ENCODE measurements at regions of chr1 and their contacts with region 1.

Region 1: GRCh38 chr1:203789956-203790355 is 5.5 kb upstream of the ZBED6 start:
- DNase-seq: no peak
- H3K4me3 ChIP-seq: no peak overlapping the region
- H3K27ac ChIP-seq: no peak overlapping the region
- H3K4me1 ChIP-seq: peaks cover 1 to 3% (median 2%) of the 10 kb centered on the region in 4 donors
- H3K27me3 ChIP-seq: no peaks in the 10 kb centered on the region
- CTCF ChIP-seq: no peak
- EP300 ChIP-seq: no peak
- POLR2A ChIP-seq: no peak

Region 2: GRCh38 chr1:203774075-203774474 is 15.9 kb before region 1 on chr1:
- in situ Hi-C with region 1: no loop called
- intact Hi-C with region 1: loop called (anchors 1 kb)
- DNase-seq: no peak
- H3K4me3 ChIP-seq: no peak overlapping the region
- H3K27ac ChIP-seq: no peak overlapping the region
- H3K4me1 ChIP-seq: peaks cover 5 to 16% (median 14%) of the 10 kb centered on the region in 4 donors
- H3K27me3 ChIP-seq: no peaks in the 10 kb centered on the region
- CTCF ChIP-seq: no peak
- EP300 ChIP-seq: no peak
- POLR2A ChIP-seq: no peak

Measured in transverse colon (tissue), 4 donors.